Brain microvascular endothelial cell (primary cell): ENCODE measurements at regions of chr2 and their contacts with region 1.

Region 1: GRCh38 chr2:174593574-174594203 is 3.9 kb downstream of the WIPF1 start:
- DNase-seq: peak; percentile 80
- H3K4me3 ChIP-seq: peak overlapping the region; percentile 24
- H3K27ac ChIP-seq: peak overlapping the region; percentile 68
- H3K27me3 ChIP-seq: no peaks in the 10 kb centered on the region
- CTCF ChIP-seq: no peak

Region 2: GRCh38 chr2:174697255-174697654 is 103.6 kb after region 1 on chr2:
- in situ Hi-C with region 1: loop called (anchors 25 kb)
- DNase-seq: peak; percentile 57
- H3K4me3 ChIP-seq: no peak overlapping the region
- H3K27ac ChIP-seq: no peak overlapping the region
- H3K27me3 ChIP-seq: no peaks in the 10 kb centered on the region
- CTCF ChIP-seq: peak; percentile 97